ENCODE measurements at regions of chr4 and their contacts with region 1.

Region 1: DNA sequence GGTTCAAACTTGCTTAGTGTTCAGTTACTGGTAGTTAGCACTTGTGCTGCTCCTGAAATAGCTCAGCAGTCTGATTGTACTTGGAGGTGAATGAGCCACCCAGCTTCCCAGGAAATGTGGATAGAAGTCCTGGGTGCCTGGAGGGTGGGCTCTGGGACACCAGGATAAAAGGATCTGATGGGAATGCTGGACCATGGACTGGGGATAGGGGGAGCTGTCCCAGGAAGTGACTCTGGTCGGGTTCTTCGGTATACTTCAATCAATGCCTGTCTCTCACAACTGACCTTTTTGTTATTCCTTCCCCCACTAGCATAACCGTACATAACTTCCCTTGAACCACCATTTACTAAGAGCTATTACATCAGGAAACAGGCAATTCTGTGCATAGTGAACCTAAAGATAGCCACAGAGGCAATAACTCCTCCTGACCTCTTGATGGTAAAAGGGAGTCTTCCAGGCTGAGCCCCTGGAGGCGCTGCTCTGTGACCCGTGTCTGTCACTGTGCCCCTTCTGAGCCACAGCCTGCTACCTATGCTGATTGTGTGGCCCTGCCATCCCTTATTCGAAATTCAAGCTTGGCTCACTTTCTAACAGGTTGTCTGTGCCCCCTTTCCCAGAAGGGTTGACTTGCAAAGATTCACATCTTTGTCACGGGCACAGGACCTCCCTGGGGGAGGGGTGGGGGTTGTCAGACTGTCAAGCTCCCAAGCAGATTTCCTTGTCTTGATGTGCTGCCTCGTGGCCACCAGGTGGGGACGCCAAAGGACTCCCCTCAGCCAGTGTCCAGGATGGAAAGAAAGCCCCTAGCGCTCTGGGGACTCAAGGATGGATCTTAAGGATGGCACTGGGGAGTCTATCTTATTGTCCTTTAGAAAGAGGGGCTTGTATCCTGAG is 24.5 kb upstream of the WDR1 start:
- DNase-seq: no peak
- H3K4me3 ChIP-seq: no peak overlapping the region
- H3K27ac ChIP-seq: no peak overlapping the region
- H3K4me1 ChIP-seq: no peaks in the 10 kb centered on the region
- H3K27me3 ChIP-seq: no peaks in the 10 kb centered on the region
- CTCF ChIP-seq: no peak
- POLR2A ChIP-seq: no peak

Region 2: GRCh38 chr4:10530137-10530786 is 389.1 kb after region 1 on chr4:
- intact Hi-C with region 1: loop called (anchors 10 kb)
- DNase-seq: peak in 1 of 2 donors; percentile 18
- H3K4me3 ChIP-seq: no peak overlapping the region
- H3K27ac ChIP-seq: no peak overlapping the region
- H3K4me1 ChIP-seq: no peaks in the 10 kb centered on the region
- H3K27me3 ChIP-seq: no peaks in the 10 kb centered on the region
- CTCF ChIP-seq: no peak
- POLR2A ChIP-seq: no peak